Heart left ventricle (tissue), 16 donors: ENCODE measurements at regions of chr5 and their contacts with region 1.

Region 1: GRCh38 chr5:102583276-102584124 is 84.7 kb upstream of the SLCO6A1 start:
- DNase-seq: no peak
- ATAC-seq: no peak
- H3K4me3 ChIP-seq: no peak overlapping the region
- H3K27ac ChIP-seq: no peak overlapping the region
- H3K4me1 ChIP-seq: no peaks in the 10 kb centered on the region
- H3K27me3 ChIP-seq: no peaks in the 10 kb centered on the region
- CTCF ChIP-seq: peak; percentile 29 to 62 (median 50)
- POLR2A ChIP-seq: no peak

Region 2: GRCh38 chr5:102536323-102536928 is 47.1 kb before region 1 on chr5:
- intact Hi-C with region 1: no loop called
- DNase-seq: no peak
- ATAC-seq: no peak
- H3K4me3 ChIP-seq: no peak overlapping the region
- H3K27ac ChIP-seq: no peak overlapping the region
- H3K4me1 ChIP-seq: peaks cover 0 to 23% (median 0%) of the 10 kb centered on the region in 12 donors
- H3K27me3 ChIP-seq: no peaks in the 10 kb centered on the region
- CTCF ChIP-seq: peak in 11 of 12 donors; percentile 15 to 55 (median 33)
- POLR2A ChIP-seq: no peak

Region 3: GRCh38 chr5:102670224-102670836 is 86.8 kb after region 1 on chr5:
- intact Hi-C with region 1: loop called in 7 of 10 experiments (anchors 2 to 10 kb)
- DNase-seq: peak in 3 of 5 donors; percentile 20 to 33 (median 32)
- ATAC-seq: peak in 3 of 4 donors; percentile 50 to 75 (median 69)
- H3K4me3 ChIP-seq: no peak overlapping the region
- H3K27ac ChIP-seq: no peak overlapping the region
- H3K4me1 ChIP-seq: peaks cover 0 to 4% (median 0%) of the 10 kb centered on the region in 12 donors
- H3K27me3 ChIP-seq: no peaks in the 10 kb centered on the region
- CTCF ChIP-seq: peak; percentile 33 to 67 (median 53)
- POLR2A ChIP-seq: no peak

Region 4: DNA sequence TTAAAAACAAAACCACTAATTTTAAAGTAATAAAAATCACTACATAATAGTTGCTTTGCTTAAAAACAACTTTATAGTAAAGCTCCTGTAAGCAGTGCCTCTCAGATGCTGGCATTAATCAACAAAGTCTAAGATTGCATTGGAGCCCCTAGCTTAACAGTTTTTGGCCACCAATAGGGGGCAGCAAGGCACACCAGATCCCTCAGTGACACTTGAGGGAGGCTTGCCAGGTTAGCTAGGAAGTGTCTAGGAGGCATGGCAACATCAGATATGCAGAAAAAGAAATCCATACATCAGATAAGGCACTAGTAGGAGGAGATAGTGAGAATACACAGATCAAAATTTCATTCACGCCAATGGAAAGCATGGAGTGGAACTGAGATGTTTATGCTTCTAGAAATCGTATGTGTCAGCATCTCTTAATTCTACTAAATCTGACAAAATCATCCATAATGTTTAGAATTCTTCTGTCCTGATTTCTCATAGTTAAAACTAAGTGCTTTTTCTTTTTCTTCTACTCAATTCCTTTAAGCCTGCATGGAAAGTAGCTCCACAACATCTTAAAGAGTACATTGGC is 98.0 kb after region 1 on chr5:
- intact Hi-C with region 1: loop called in 1 of 10 experiments (anchors 5 kb)
- DNase-seq: peak; percentile 62 to 75 (median 71)
- ATAC-seq: peak in 3 of 4 donors; percentile 84 to 88 (median 87)
- H3K4me3 ChIP-seq: no peak overlapping the region
- H3K27ac ChIP-seq: no peak overlapping the region
- H3K4me1 ChIP-seq: no peaks in the 10 kb centered on the region
- H3K27me3 ChIP-seq: no peaks in the 10 kb centered on the region
- CTCF ChIP-seq: peak; percentile 59 to 91 (median 82)
- POLR2A ChIP-seq: no peak

Region 5: DNA sequence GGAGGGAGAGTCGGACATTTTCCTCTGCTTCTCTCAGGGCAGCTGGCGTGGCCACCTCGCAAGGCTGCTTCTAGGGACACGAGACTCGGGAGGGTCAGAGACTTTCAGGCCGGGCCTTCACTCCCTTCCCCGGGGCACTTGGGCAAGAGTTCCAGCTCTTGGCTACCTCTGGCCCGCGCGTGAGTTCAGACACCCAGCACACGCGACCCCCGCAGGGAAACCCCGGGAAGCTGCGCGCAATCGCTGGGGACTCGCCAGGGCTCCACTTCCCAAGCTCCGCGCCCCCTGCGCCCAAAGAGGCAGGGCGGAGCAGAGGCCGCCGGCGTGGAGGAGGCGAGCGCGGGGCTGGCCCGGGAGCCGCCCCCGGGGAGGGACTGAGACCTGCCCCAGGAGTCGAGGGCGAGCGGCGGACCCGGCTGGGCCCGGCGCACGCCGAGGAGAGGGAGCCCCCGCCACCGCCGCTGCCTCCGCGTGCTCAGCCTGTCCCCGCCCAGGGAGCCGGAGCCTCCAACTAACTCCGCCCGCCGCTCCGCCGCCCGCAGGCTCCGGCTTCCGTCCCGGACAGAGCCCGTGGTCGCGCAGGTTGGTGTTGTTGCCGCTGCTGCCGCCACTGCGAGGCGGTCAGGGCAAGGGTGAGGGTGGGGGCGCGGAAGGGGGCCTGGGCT is 171.4 kb after region 1 on chr5 and contains the start of gene PAM:
- intact Hi-C with region 1: loop called in 2 of 10 experiments (anchors 10 kb)
- DNase-seq: peak; percentile 85 to 92 (median 87)
- ATAC-seq: peak; percentile 85 to 95 (median 94)
- H3K4me3 ChIP-seq: peak within 1 kb of the TSS; percentile 56 to 97 (median 82)
- H3K27ac ChIP-seq: peak within 1 kb of the TSS; percentile 47 to 94 (median 85)
- H3K4me1 ChIP-seq: peaks cover 0 to 44% (median 25%) of the 10 kb centered on the region in 12 donors
- H3K27me3 ChIP-seq: no peaks in the 10 kb centered on the region
- CTCF ChIP-seq: peak in 1 of 12 donors; percentile 9
- POLR2A ChIP-seq: peak in 1 of 2 donors; percentile 53
- total RNA-seq, gene PAM: 578 to 1,548 (median 1,139) TPM

Region 6: GRCh38 chr5:102971697-102972293 is 388.3 kb after region 1 on chr5:
- intact Hi-C with region 1: loop called in 2 of 10 experiments (anchors 5 kb)
- DNase-seq: no peak
- ATAC-seq: peak in 2 of 4 donors; percentile 52 to 53
- H3K4me3 ChIP-seq: no peak overlapping the region
- H3K27ac ChIP-seq: no peak overlapping the region
- H3K4me1 ChIP-seq: peaks cover 0 to 16% (median 5%) of the 10 kb centered on the region in 12 donors
- H3K27me3 ChIP-seq: no peaks in the 10 kb centered on the region
- CTCF ChIP-seq: peak in 11 of 12 donors; percentile 27 to 62 (median 46)
- POLR2A ChIP-seq: no peak

Region 7: GRCh38 chr5:103041071-103041676 is 457.7 kb after region 1 on chr5:
- intact Hi-C with region 1: loop called in 9 of 10 experiments (anchors 1 to 5 kb)
- DNase-seq: no peak
- ATAC-seq: no peak
- H3K4me3 ChIP-seq: no peak overlapping the region
- H3K27ac ChIP-seq: no peak overlapping the region
- H3K4me1 ChIP-seq: no peaks in the 10 kb centered on the region
- H3K27me3 ChIP-seq: no peaks in the 10 kb centered on the region
- CTCF ChIP-seq: peak; percentile 41 to 81 (median 62)
- POLR2A ChIP-seq: no peak

Region 8: DNA sequence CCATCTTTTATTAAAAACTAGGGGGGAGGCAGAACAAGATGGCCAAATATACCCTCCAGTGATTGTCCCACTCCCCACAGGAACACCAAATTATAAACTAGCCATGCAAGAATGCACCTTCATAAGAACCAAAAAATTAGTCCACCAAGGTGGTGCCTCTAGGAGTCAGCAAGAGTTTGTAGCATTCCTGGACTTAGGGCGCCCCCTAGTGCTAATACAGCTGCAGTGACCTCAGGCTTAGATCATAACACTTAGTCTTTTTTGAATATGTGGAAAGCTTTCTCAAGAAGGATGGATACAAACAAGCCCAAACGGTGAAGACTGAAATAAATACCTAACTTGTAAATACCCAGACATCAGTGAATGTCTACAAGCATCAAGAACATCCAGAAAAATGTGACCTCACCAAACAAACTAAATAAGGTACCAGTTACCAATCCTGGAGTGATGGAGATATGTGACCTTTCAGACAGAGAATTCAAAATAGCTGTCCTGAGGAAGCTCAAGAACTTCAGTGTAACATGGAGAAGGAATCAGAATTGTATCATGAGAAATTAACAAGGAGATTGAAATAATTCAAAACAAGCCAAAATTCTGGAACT is 555.9 kb after region 1 on chr5:
- intact Hi-C with region 1: loop called in 7 of 10 experiments (anchors 1 to 10 kb)
- DNase-seq: peak in 4 of 5 donors; percentile 54 to 76 (median 72)
- ATAC-seq: peak; percentile 71 to 90 (median 87)
- H3K4me3 ChIP-seq: no peak overlapping the region
- H3K27ac ChIP-seq: no peak overlapping the region
- H3K4me1 ChIP-seq: no peaks in the 10 kb centered on the region
- H3K27me3 ChIP-seq: no peaks in the 10 kb centered on the region
- CTCF ChIP-seq: peak; percentile 76 to 95 (median 90)
- POLR2A ChIP-seq: no peak